Motor neuron (in vitro differentiated cells): ENCODE measurements at regions of chr3 and their contacts with region 1.

Region 1: GRCh38 chr3:42961633-42962032 is 17.5 kb upstream of the GASK1A start:
- ATAC-seq: peak; percentile 71 to 94 (median 84)
- H3K4me3 ChIP-seq: no peak overlapping the region
- H3K27ac ChIP-seq: no peak overlapping the region
- H3K4me1 ChIP-seq: no peaks in the 10 kb centered on the region

Region 2: GRCh38 chr3:42800251-42800650 is 161.4 kb before region 1 on chr3:
- in situ Hi-C with region 1: no loop called
- ATAC-seq: no peak
- H3K4me3 ChIP-seq: no peak overlapping the region
- H3K27ac ChIP-seq: no peak overlapping the region
- H3K4me1 ChIP-seq: peaks cover 15 to 25% of the 10 kb centered on the region in 2 donors

Region 3: GRCh38 chr3:43144761-43145490 is 183.3 kb after region 1 on chr3:
- in situ Hi-C with region 1: loop called in 3 of 9 experiments (anchors 10 to 25 kb)
- ATAC-seq: peak in 2 of 8 experiments; percentile 44 to 67
- H3K4me3 ChIP-seq: no peak overlapping the region
- H3K27ac ChIP-seq: no peak overlapping the region
- H3K4me1 ChIP-seq: no peaks in the 10 kb centered on the region

Region 4: GRCh38 chr3:43162230-43163084 is 200.8 kb after region 1 on chr3:
- in situ Hi-C with region 1: loop called in 2 of 9 experiments (anchors 10 to 25 kb)
- ATAC-seq: peak; percentile 70 to 91 (median 80)
- H3K4me3 ChIP-seq: no peak overlapping the region
- H3K27ac ChIP-seq: no peak overlapping the region
- H3K4me1 ChIP-seq: peaks cover 0 to 4% of the 10 kb centered on the region in 2 donors

Region 5: DNA sequence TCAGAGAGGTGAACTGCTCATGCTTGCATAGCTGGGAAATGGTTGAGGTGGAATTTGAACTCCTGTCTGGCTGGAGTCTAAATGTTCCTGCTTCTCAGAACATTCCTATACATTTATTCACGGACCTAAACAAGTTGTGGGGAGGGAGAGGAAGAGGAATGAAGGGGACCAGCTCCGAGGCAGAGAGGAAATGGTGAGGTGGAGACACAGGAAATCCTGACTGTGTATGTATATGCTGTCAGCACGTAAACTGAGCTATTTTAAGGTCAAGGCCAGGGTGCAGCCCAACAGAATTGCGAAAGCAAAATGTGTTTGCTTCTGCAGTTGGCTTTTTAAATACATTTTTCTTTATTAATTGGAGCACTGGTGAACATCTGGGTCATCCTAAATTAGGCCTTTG is 218.4 kb after region 1 on chr3:
- in situ Hi-C with region 1: no loop called
- ATAC-seq: peak in 3 of 8 experiments; percentile 13 to 57 (median 50)
- H3K4me3 ChIP-seq: no peak overlapping the region
- H3K27ac ChIP-seq: no peak overlapping the region
- H3K4me1 ChIP-seq: peaks cover 3 to 12% of the 10 kb centered on the region in 2 donors

Region 6: GRCh38 chr3:44198284-44199269 is 1236.9 kb after region 1 on chr3:
- in situ Hi-C with region 1: loop called in 2 of 9 experiments (anchors 25 kb)
- ATAC-seq: peak; percentile 71 to 97 (median 88)
- H3K4me3 ChIP-seq: no peak overlapping the region
- H3K27ac ChIP-seq: no peak overlapping the region
- H3K4me1 ChIP-seq: no peaks in the 10 kb centered on the region